Adrenal gland (tissue), 19 donors: ENCODE measurements at regions of chr12 and their contacts with region 1.

Region 1: GRCh38 chr12:49776413-49776812 is 35.1 kb downstream of the TMBIM6 start:
- DNase-seq: peak; percentile 55 to 87 (median 78)
- H3K4me3 ChIP-seq: no peak overlapping the region
- H3K27ac ChIP-seq: no peak overlapping the region
- H3K4me1 ChIP-seq: no peaks in the 10 kb centered on the region
- H3K27me3 ChIP-seq: no peaks in the 10 kb centered on the region
- CTCF ChIP-seq: peak; percentile 56 to 93 (median 86)
- POLR2A ChIP-seq: no peak

Region 2: DNA sequence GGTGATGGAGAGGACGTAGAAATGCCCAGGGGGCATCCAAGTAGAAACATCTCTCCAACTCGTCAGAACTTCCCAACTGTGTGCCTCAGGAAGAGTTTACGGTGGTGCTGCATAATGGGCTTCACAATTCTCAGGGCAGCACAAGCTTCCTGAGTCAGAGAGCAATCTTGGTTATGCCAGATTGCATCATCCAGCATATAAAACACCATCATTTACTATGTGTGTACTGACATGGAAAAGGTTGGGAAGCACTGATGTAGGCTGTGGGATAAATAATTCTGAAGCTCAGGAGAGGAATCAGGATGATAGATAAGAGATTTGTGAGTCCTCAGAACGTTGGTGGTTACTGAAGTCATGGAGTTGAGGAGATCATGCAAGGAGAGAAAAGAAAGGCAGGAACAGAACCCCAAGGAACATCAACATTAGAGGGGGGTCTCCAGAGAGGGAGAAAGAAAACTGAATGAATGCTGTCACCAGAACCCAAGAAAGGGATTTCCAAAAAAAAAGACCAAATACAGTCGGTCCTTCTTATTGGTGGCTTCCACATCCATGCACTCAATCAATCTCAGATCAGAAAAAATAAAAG is 56.5 kb after region 1 on chr12:
- intact Hi-C with region 1: loop called in 1 of 2 experiments (anchors 5 kb)
- DNase-seq: no peak
- H3K4me3 ChIP-seq: no peak overlapping the region
- H3K27ac ChIP-seq: no peak overlapping the region
- H3K4me1 ChIP-seq: peaks cover 4 to 6% of the 10 kb centered on the region in 2 donors
- H3K27me3 ChIP-seq: no peaks in the 10 kb centered on the region
- CTCF ChIP-seq: no peak
- POLR2A ChIP-seq: no peak

Region 3: GRCh38 chr12:49842519-49843352 is 66.3 kb after region 1 on chr12 and contains the start of gene BCDIN3D:
- intact Hi-C with region 1: loop called in 1 of 2 experiments (anchors 10 kb)
- DNase-seq: peak; percentile 89 to 95 (median 93)
- H3K4me3 ChIP-seq: peak within 1 kb of the TSS; percentile 17 to 71 (median 56)
- H3K27ac ChIP-seq: peak within 1 kb of the TSS; percentile 82 to 88 (median 84)
- H3K4me1 ChIP-seq: peaks cover 8 to 23% of the 10 kb centered on the region in 2 donors
- H3K27me3 ChIP-seq: no peaks in the 10 kb centered on the region
- CTCF ChIP-seq: no peak
- POLR2A ChIP-seq: peak; percentile 55 to 87
- total RNA-seq, gene BCDIN3D: 1.9 to 8.9 (median 4.9) TPM